Activated T-helper 2 cell treated with anti-CD3 and anti-CD28 coated beads, Interferon-gamma antibody, Interleukin-2, Interleukin-4, amounts not matched to agents 10 μg/mL and 5 μg/mL and 100 μg/mL, durations not matched to agents 14 hours and 24 hours and 36 hours (primary cell): ENCODE measurements at regions of chr7 and their contacts with region 1.

Region 1: GRCh38 chr7:104231054-104232046 is 23.5 kb upstream of the ORC5 start:
- DNase-seq: peak; percentile 14
- H3K4me3 Mint-ChIP-seq: no peak overlapping the region
- H3K27ac Mint-ChIP-seq: no peak overlapping the region
- H3K4me1 Mint-ChIP-seq: no peaks in the 10 kb centered on the region
- H3K27me3 Mint-ChIP-seq: peaks cover 29% of the 10 kb centered on the region

Region 2: GRCh38 chr7:104126411-104126841 is 104.9 kb before region 1 on chr7:
- intact Hi-C with region 1: no loop called
- DNase-seq: no peak
- H3K4me3 Mint-ChIP-seq: no peak overlapping the region
- H3K27ac Mint-ChIP-seq: no peak overlapping the region
- H3K4me1 Mint-ChIP-seq: no peaks in the 10 kb centered on the region
- H3K27me3 Mint-ChIP-seq: no peaks in the 10 kb centered on the region

Region 3: DNA sequence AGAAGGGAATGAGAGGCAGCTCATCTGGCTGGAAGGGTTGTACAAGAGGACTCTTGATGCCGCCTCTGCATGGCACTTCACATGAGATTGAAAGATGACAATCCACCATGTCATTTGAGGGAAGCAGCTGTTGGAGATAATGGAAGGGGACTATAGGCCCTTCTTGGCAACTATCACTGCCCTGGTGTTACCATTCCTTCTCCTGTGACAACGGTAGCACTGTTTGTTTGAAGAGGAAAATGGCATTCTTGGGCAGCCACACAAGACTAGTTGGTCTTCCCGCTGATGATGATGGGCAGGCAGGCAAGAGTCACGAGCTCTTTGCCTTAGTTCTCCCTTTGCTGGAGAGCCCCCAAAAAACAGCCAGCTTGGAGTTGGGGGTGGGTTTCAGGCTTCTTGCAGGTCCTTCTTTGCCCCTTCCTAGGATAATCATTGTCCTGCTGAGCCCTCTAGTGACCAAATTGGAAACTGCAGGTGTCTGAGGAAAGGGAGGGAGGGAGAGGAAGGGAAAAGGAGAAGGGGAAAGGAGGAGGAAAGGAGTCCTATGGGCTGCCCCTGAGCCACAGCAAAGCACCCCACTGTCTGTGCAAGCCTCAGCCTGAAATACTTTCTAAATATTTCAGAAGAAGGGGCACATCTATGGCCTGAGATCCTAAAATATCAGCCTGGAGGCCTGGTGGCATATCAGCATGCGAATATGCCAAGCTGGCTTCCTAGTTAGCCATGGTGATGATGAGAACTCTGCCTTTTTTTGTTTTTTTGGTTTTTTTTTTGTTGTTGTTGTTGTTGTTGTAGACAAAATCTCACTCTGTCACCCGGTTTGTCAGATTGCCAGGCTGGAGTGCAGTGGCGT is 617.0 kb after region 1 on chr7:
- intact Hi-C with region 1: loop called (anchors 1 kb)
- DNase-seq: peak; percentile 20
- H3K4me3 Mint-ChIP-seq: no peak overlapping the region
- H3K27ac Mint-ChIP-seq: no peak overlapping the region
- H3K4me1 Mint-ChIP-seq: no peaks in the 10 kb centered on the region
- H3K27me3 Mint-ChIP-seq: peaks cover 24% of the 10 kb centered on the region

Region 4: DNA sequence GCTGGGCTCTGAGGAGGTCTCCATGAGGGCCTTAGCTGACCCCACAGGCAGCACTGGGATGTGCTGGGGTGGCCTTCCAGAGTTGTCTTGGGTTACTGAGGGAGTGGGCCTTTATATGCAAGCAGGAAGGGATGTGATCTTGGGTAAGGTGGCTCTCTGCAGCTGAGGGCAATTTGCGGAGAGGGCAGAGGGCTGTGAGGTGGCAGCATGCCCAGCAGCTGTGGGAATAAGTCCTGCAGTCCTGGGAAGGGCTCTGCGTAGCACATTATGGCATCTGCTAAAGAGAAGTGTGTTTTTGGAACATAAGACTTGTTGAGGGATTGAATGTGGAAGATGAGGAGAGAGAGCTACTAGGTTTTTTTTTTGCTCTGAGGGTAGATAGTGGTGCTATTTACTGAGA is 683.1 kb after region 1 on chr7:
- intact Hi-C with region 1: loop called (anchors 10 kb)
- DNase-seq: no peak
- H3K4me3 Mint-ChIP-seq: no peak overlapping the region
- H3K27ac Mint-ChIP-seq: no peak overlapping the region
- H3K4me1 Mint-ChIP-seq: peaks cover 2% of the 10 kb centered on the region
- H3K27me3 Mint-ChIP-seq: peaks cover 21% of the 10 kb centered on the region